Naive thymus-derived CD4-positive, alpha-beta T cell (primary cell): ENCODE measurements at regions of chr3 and their contacts with region 1.

Region 1: GRCh38 chr3:34683851-34684250 is 885.4 kb downstream of the PDCD6IP start:
- DNase-seq: peak in 6 of 9 donors; percentile 11 to 40 (median 20)
- ATAC-seq: no peak
- H3K4me3 ChIP-seq: no peak overlapping the region
- H3K4me3 Mint-ChIP-seq: no peak overlapping the region
- H3K27ac ChIP-seq: no peak overlapping the region
- H3K27ac Mint-ChIP-seq: no peak overlapping the region
- H3K4me1 ChIP-seq: no peaks in the 10 kb centered on the region
- H3K4me1 Mint-ChIP-seq: peaks cover 0 to 3% (median 0%) of the 10 kb centered on the region in 7 donors
- H3K27me3 ChIP-seq: no peaks in the 10 kb centered on the region
- H3K27me3 Mint-ChIP-seq: peaks cover 0 to 4% (median 0%) of the 10 kb centered on the region in 5 donors

Region 2: GRCh38 chr3:33883538-33883950 is 800.3 kb before region 1 on chr3:
- CTCF ChIA-PET with region 1: interaction called, 18 read pairs
- POLR2A ChIA-PET with region 1: no interaction called
- intact Hi-C with region 1: loop called in 1 of 2 experiments (anchors 1 kb)
- DNase-seq: peak in 7 of 9 donors; percentile 16 to 59 (median 52)
- ATAC-seq: peak; percentile 44
- H3K4me3 ChIP-seq: no peak overlapping the region
- H3K4me3 Mint-ChIP-seq: peak overlapping the region in 5 of 10 donors; percentile 2 to 69 (median 46)
- H3K27ac ChIP-seq: no peak overlapping the region
- H3K27ac Mint-ChIP-seq: peak overlapping the region in 1 of 9 donors; percentile 80
- H3K4me1 ChIP-seq: peaks cover 0 to 3% of the 10 kb centered on the region in 2 donors
- H3K4me1 Mint-ChIP-seq: peaks cover 0 to 5% (median 4%) of the 10 kb centered on the region in 7 donors
- H3K27me3 ChIP-seq: no peaks in the 10 kb centered on the region
- H3K27me3 Mint-ChIP-seq: peaks cover 0 to 8% (median 5%) of the 10 kb centered on the region in 5 donors

Region 3: DNA sequence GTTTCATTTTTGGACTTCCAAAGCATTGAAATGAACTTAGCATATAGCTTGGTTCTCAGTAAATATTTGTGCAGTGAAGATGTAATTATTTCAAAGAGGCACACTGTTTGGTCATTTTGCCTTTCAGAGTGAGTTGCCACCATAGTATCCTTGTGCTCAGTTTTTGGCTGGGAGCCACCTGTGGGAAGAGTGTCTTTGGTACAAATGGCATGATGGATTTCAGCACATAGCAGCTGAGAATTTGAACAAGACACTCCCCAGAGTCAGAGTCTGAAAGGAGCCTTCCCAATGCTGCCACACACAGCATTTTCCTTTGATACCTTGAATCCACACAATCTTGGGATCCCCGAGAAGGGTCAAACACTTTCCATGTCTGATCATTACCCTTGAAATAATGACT is 58.3 kb after region 1 on chr3:
- CTCF ChIA-PET with region 1: no interaction called
- POLR2A ChIA-PET with region 1: no interaction called
- intact Hi-C with region 1: loop called in 1 of 2 experiments (anchors 2 kb)
- DNase-seq: no peak
- ATAC-seq: no peak
- H3K4me3 ChIP-seq: no peak overlapping the region
- H3K4me3 Mint-ChIP-seq: no peak overlapping the region
- H3K27ac ChIP-seq: no peak overlapping the region
- H3K27ac Mint-ChIP-seq: no peak overlapping the region
- H3K4me1 ChIP-seq: no peaks in the 10 kb centered on the region
- H3K4me1 Mint-ChIP-seq: no peaks in the 10 kb centered on the region
- H3K27me3 ChIP-seq: no peaks in the 10 kb centered on the region
- H3K27me3 Mint-ChIP-seq: no peaks in the 10 kb centered on the region